Dorsolateral prefrontal cortex (tissue), 120 donors: ENCODE measurements at regions of chr16 and their contacts with region 1.

Region 1: DNA sequence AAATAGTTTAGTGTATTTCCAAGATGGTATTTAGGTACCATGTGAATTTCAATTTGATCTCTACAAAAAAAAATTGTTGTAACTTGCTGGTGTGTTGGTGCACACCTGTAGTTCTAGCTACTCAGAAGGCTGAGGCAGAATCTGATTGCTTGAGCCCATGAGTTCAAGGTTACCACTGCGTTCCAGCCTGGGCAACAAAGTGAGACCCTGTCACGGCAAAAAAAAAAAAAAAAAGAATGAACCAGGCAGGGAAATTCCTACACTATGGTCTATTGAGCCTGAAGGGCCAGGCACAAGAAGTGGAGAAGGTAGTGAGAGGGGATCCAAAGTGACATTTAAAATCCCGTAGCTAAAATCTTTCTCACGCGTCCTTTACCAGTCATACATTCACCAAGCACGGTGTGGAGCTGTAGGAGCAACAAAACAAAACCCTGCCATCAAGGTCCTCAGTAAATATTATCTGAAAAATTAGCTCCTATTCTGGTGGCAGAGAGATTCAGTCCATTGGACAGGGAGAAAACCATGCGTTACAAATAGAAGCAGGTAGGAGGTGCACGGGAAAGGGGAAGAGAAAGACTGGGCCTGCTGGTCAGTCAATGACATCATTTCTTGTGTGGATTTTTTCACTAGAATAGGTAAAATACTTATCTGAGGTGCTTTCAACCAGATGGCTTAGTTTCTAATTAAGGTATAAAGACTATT is 27.3 kb downstream of the TXNDC11 start:
- DNase-seq: no peak
- H3K4me3 ChIP-seq: no peak overlapping the region
- H3K27ac ChIP-seq: peak overlapping the region in 3 of 59 donors; percentile 11 to 66 (median 22)
- H3K27me3 ChIP-seq: no peaks in the 10 kb centered on the region
- CTCF ChIP-seq: no peak

Region 2: GRCh38 chr16:10964039-10964890 is 751.1 kb before region 1 on chr16:
- intact Hi-C with region 1: loop called in 1 of 2 experiments (anchors 10 kb)
- DNase-seq: peak; percentile 77 to 88 (median 83)
- H3K4me3 ChIP-seq: peak overlapping the region in 10 of 59 donors; percentile 7 to 36 (median 16)
- H3K27ac ChIP-seq: peak overlapping the region in 12 of 59 donors; percentile 9 to 65 (median 23)
- H3K27me3 ChIP-seq: no peaks in the 10 kb centered on the region
- CTCF ChIP-seq: peak; percentile 79 to 98 (median 95)

Region 3: GRCh38 chr16:11524098-11524750 is 191.2 kb before region 1 on chr16:
- intact Hi-C with region 1: no loop called
- DNase-seq: no peak
- H3K4me3 ChIP-seq: no peak overlapping the region
- H3K27ac ChIP-seq: no peak overlapping the region
- H3K27me3 ChIP-seq: peaks cover 0 to 5% (median 0%) of the 10 kb centered on the region in 45 donors
- CTCF ChIP-seq: no peak

Region 4: GRCh38 chr16:11560701-11561449 is 154.5 kb before region 1 on chr16:
- intact Hi-C with region 1: no loop called
- DNase-seq: no peak
- H3K4me3 ChIP-seq: no peak overlapping the region
- H3K27ac ChIP-seq: peak overlapping the region in 43 of 59 donors; percentile 0 to 99 (median 44)
- H3K27me3 ChIP-seq: no peaks in the 10 kb centered on the region
- CTCF ChIP-seq: no peak